Activated CD8-positive, alpha-beta memory T cell treated with anti-CD3 and anti-CD28 coated beads, Interleukin-2, amount 10 ng/mL, durations not matched to agents 7 days and 5 days (primary cell): ENCODE measurements at regions of chr3 and their contacts with region 1.

Region 1: GRCh38 chr3:27712136-27713077 is 9.7 kb downstream of the EOMES start:
- DNase-seq: peak; percentile 90
- ATAC-seq: peak; percentile 93
- H3K4me3 Mint-ChIP-seq: peak overlapping the region; percentile 86
- H3K27ac Mint-ChIP-seq: peak overlapping the region; percentile 90
- H3K4me1 Mint-ChIP-seq: peaks cover 27% of the 10 kb centered on the region
- H3K27me3 Mint-ChIP-seq: peaks cover 41% of the 10 kb centered on the region

Region 2: DNA sequence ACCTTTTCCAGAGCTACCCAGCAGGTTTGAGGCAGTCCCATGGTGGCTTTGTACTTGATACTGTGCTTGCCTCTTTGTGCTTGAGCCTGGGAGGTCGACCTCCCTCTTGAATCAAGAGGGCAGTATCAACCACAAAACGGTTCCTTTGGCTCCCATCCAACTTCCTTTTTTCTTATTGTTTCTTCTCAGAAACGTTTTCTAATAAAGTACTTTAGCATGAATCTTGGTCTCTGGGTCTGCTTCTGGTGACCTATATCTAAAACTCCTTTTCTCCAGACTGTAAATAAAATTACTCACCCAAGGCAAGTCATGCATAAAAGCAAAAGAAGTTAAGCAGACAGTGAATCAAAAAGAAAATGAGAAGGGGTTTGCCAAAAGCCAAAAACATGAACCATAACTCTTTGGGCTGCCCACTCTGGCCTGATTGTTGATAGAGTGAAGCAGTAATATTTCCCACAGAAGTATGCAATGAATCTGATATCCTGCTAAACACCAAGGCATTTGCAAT is 116.0 kb before region 1 on chr3:
- CTCF ChIA-PET with region 1: no interaction called
- DNase-seq: no peak
- ATAC-seq: peak; percentile 39
- H3K4me3 Mint-ChIP-seq: no peak overlapping the region
- H3K27ac Mint-ChIP-seq: peak overlapping the region; percentile 73
- H3K4me1 Mint-ChIP-seq: peaks cover 36% of the 10 kb centered on the region
- H3K27me3 Mint-ChIP-seq: no peaks in the 10 kb centered on the region

Region 3: DNA sequence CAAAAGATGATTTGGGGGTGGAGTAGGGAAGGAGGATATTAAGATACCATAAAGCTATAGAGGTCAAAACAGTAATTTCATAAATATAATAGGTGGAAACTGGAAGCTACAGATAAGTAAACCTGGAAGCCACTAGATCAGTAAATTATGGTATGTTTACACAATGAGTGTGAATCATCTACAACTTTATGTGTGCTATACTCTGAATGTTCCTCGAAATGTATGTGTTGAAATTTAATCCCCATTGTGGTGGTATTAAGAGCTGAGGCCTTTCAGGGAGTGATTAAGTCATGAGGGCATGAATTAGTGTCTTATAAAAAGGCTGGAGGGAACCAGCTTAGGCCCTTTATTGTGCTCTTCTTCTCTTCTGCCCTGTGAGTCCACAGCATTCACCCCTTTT is 15.5 kb before region 1 on chr3:
- CTCF ChIA-PET with region 1: interaction called, 12 read pairs
- DNase-seq: no peak
- ATAC-seq: no peak
- H3K4me3 Mint-ChIP-seq: no peak overlapping the region
- H3K27ac Mint-ChIP-seq: no peak overlapping the region
- H3K4me1 Mint-ChIP-seq: no peaks in the 10 kb centered on the region
- H3K27me3 Mint-ChIP-seq: peaks cover 4% of the 10 kb centered on the region

Region 4: GRCh38 chr3:28124882-28125281 is 412.5 kb after region 1 on chr3:
- CTCF ChIA-PET with region 1: no interaction called
- DNase-seq: no peak
- ATAC-seq: no peak
- H3K4me3 Mint-ChIP-seq: no peak overlapping the region
- H3K27ac Mint-ChIP-seq: no peak overlapping the region
- H3K4me1 Mint-ChIP-seq: no peaks in the 10 kb centered on the region
- H3K27me3 Mint-ChIP-seq: no peaks in the 10 kb centered on the region

Region 5: GRCh38 chr3:28286595-28286994 is 574.2 kb after region 1 on chr3:
- CTCF ChIA-PET with region 1: interaction called, 20 read pairs
- DNase-seq: no peak
- ATAC-seq: peak; percentile 80
- H3K4me3 Mint-ChIP-seq: no peak overlapping the region
- H3K27ac Mint-ChIP-seq: no peak overlapping the region
- H3K4me1 Mint-ChIP-seq: peaks cover 13% of the 10 kb centered on the region
- H3K27me3 Mint-ChIP-seq: no peaks in the 10 kb centered on the region

Region 6: GRCh38 chr3:28328188-28329151 is 616.1 kb after region 1 on chr3:
- CTCF ChIA-PET with region 1: interaction called, 82 read pairs
- DNase-seq: no peak
- ATAC-seq: no peak
- H3K4me3 Mint-ChIP-seq: no peak overlapping the region
- H3K27ac Mint-ChIP-seq: peak overlapping the region; percentile 68
- H3K4me1 Mint-ChIP-seq: peaks cover 48% of the 10 kb centered on the region
- H3K27me3 Mint-ChIP-seq: no peaks in the 10 kb centered on the region

Region 7: DNA sequence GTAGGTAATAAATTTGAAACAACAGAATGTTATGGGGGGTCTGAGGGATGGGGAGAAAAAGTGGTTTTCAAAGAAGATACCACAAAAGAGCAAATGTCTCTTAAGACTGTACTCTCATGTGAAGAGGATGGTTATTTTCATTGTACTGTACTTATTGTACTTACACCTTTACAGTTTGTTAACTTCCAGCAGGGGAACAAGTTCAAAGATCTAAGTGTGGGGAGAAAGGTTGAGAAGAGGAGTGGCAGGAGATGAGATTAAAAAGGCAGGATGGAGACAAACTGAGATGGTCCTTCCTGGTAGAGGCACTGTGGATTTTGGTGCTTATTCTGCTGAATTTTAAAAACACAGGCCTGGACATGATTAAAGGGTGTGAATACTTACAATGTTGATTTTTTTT is 630.7 kb after region 1 on chr3:
- CTCF ChIA-PET with region 1: interaction called, 27 read pairs
- DNase-seq: no peak
- ATAC-seq: no peak
- H3K4me3 Mint-ChIP-seq: no peak overlapping the region
- H3K27ac Mint-ChIP-seq: peak overlapping the region; percentile 45
- H3K4me1 Mint-ChIP-seq: peaks cover 47% of the 10 kb centered on the region
- H3K27me3 Mint-ChIP-seq: no peaks in the 10 kb centered on the region